Naive thymus-derived CD8-positive, alpha-beta T cell (primary cell): ENCODE measurements at regions of chr16 and their contacts with region 1.

Region 1: GRCh38 chr16:29700253-29700987 is 21.4 kb downstream of the QPRT start:
- DNase-seq: peak; percentile 59 to 83 (median 76)
- ATAC-seq: peak in 1 of 2 donors; percentile 27
- H3K4me3 Mint-ChIP-seq: peak overlapping the region; percentile 44 to 87 (median 76)
- H3K27ac Mint-ChIP-seq: peak overlapping the region; percentile 90 to 100 (median 96)
- H3K4me1 Mint-ChIP-seq: peaks cover 18 to 33% (median 30%) of the 10 kb centered on the region in 4 donors
- H3K27me3 Mint-ChIP-seq: peaks cover 0 to 1% (median 0%) of the 10 kb centered on the region in 5 donors

Region 2: DNA sequence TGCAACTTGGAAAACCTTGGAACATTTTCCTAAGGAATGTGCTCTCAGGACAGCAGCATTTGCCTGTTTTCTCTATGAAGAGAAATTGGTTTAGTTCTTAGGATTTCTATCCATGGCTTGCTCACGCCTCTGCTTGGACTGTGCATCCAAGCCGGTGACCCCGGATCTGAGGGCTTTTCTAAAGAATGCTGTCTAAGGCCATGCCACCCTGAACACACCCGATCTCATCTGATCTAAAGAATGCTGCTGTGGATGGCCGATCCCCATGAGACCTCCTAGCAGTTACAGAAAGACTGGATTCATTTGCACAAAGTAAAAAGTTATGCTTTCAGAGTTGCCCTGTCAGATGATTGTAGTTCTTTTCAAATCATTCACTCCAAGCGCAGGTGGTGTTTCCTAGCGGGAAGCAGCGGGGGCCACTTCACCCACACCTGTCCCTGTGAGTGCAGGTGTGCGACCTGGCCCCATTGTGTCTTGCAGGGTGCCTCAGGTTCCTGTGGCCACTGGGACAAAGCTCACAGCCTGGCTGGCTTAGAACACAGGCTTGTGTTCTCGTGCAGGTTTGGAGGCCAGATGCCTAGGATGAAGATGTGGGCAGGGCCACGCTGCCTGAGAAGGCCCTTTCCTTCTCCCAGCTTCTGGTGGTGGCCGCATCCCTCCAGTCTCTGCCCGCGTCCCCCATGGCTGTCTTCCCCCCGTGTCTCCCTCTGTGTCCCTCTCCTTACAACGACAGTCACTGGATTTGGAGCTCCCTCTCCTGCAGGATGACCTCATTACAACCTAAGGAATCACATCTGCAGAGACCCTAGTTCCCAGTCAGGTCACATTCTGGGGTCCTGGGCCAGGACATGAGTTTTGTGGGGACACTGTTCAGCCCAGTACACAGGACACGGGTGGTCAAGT is 384.6 kb before region 1 on chr16:
- POLR2A ChIA-PET with region 1: no interaction called
- DNase-seq: no peak
- ATAC-seq: no peak
- H3K4me3 Mint-ChIP-seq: no peak overlapping the region
- H3K27ac Mint-ChIP-seq: peak overlapping the region in 1 of 10 donors; percentile 36
- H3K4me1 Mint-ChIP-seq: peaks cover 0 to 3% (median under 1%) of the 10 kb centered on the region in 4 donors
- H3K27me3 Mint-ChIP-seq: no peaks in the 10 kb centered on the region

Region 3: DNA sequence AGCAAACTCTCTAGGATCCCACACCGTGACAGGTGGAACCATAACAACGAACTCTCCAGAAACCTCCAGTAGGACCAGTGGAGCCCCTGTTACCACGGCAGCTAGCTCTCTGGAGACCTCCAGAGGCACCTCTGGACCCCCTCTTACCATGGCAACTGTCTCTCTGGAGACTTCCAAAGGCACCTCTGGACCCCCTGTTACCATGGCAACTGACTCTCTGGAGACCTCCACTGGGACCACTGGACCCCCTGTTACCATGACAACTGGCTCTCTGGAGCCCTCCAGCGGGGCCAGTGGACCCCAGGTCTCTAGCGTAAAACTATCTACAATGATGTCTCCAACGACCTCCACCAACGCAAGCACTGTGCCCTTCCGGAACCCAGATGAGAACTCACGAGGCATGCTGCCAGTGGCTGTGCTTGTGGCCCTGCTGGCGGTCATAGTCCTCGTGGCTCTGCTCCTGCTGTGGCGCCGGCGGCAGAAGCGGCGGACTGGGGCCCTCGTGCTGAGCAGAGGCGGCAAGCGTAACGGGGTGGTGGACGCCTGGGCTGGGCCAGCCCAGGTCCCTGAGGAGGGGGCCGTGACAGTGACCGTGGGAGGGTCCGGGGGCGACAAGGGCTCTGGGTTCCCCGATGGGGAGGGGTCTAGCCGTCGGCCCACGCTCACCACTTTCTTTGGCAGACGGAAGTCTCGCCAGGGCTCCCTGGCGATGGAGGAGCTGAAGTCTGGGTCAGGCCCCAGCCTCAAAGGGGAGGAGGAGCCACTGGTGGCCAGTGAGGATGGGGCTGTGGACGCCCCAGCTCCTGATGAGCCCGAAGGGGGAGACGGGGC is 36.1 kb before region 1 on chr16:
- POLR2A ChIA-PET with region 1: interaction called, 10 read pairs
- DNase-seq: peak in 9 of 10 donors; percentile 36 to 77 (median 54)
- ATAC-seq: peak; percentile 44 to 49
- H3K4me3 Mint-ChIP-seq: peak overlapping the region; percentile 93 to 99 (median 96)
- H3K27ac Mint-ChIP-seq: peak overlapping the region; percentile 94 to 100 (median 97)
- H3K4me1 Mint-ChIP-seq: peaks cover 39 to 77% (median 69%) of the 10 kb centered on the region in 4 donors
- H3K27me3 Mint-ChIP-seq: peaks cover 0 to 3% (median 0%) of the 10 kb centered on the region in 5 donors

Region 4: GRCh38 chr16:29720699-29721098 is 20.3 kb after region 1 on chr16:
- POLR2A ChIA-PET with region 1: interaction called, 17 read pairs
- DNase-seq: no peak
- ATAC-seq: no peak
- H3K4me3 Mint-ChIP-seq: no peak overlapping the region
- H3K27ac Mint-ChIP-seq: peak overlapping the region in 4 of 10 donors; percentile 15 to 81 (median 70)
- H3K4me1 Mint-ChIP-seq: peaks cover 9 to 23% (median 20%) of the 10 kb centered on the region in 4 donors
- H3K27me3 Mint-ChIP-seq: no peaks in the 10 kb centered on the region

Region 5: DNA sequence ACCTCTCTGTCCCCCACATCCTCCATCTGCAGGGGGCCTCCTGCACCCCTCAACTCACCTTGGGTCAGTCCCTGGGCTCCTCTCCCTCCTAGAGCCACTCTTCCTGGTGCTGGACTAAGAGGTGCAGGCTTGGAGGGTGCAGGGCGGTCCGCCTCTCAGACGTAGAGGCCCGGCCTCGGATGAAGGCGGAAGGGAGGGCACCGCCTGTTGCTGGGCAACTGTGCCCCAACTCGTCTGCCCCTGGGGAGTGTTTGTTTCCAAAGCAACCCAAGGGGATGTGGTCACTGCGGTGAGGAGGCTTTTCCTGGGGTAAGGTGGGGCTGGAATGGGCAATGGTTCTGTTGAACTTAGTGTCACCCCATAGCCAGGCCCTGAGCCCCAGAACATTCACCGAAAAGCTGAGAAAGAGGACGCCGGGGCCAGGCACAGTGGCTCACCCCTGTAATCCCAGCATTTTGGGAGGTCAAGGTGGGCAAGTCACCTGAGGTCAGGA is 45.5 kb after region 1 on chr16 and contains the start of gene C16orf54:
- POLR2A ChIA-PET with region 1: interaction called, 50 read pairs
- DNase-seq: peak; percentile 81 to 100 (median 98)
- ATAC-seq: peak; percentile 71 to 83
- H3K4me3 Mint-ChIP-seq: peak within 1 kb of the TSS; percentile 96 to 100 (median 99)
- H3K27ac Mint-ChIP-seq: peak within 1 kb of the TSS; percentile 82 to 100 (median 100)
- H3K4me1 Mint-ChIP-seq: peaks cover 34 to 76% (median 67%) of the 10 kb centered on the region in 4 donors
- H3K27me3 Mint-ChIP-seq: peaks cover 0 to 4% (median 0%) of the 10 kb centered on the region in 5 donors
- polyA plus RNA-seq, gene C16orf54: 20.7 to 32.7 (median 29.2) TPM

Region 6: DNA sequence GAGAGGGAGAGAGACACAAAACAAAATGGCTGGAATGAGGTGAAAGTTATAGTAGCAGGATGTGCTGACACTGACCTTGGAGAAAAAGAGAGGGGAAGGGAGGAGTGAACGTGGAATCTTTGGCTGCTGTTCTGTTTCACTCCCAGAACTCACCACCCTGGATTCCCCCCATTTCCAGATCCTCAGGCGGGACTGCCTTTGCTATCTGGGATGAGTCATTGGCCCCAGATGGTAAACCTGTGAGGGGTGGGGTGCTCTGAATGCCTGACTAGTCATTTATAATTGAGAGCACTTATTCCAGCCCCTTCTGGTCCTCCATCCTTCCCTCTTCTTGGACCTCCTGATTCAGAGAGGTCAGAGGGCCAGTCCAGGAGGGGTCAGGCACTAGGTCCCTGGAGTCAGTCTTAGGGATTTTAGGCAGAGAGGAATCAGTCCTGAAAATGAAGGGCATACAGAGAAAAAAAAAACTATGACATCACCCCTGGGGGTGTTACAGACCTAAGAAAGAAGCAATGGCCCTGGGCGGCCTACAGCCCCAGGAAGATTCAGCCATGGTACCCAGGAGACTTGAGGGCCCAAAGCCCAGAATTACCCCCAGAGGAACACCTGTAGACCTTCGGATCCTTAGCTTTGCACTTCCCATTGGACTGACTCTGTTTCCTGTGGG is 75.5 kb after region 1 on chr16:
- POLR2A ChIA-PET with region 1: no interaction called
- DNase-seq: no peak
- ATAC-seq: no peak
- H3K4me3 Mint-ChIP-seq: no peak overlapping the region
- H3K27ac Mint-ChIP-seq: peak overlapping the region in 1 of 10 donors; percentile 93
- H3K4me1 Mint-ChIP-seq: peaks cover 5 to 54% (median 20%) of the 10 kb centered on the region in 4 donors
- H3K27me3 Mint-ChIP-seq: no peaks in the 10 kb centered on the region

Region 7: GRCh38 chr16:29790183-29790952 is 89.9 kb after region 1 on chr16 and contains the start of gene KIF22:
- POLR2A ChIA-PET with region 1: interaction called, 98 read pairs
- DNase-seq: peak; percentile 98 to 100 (median 100)
- ATAC-seq: peak; percentile 92 to 94
- H3K4me3 Mint-ChIP-seq: peak within 1 kb of the TSS; percentile 95 to 99 (median 98)
- H3K27ac Mint-ChIP-seq: peak within 1 kb of the TSS; percentile 98 to 99 (median 99)
- H3K4me1 Mint-ChIP-seq: peaks cover 22 to 58% (median 52%) of the 10 kb centered on the region in 4 donors
- H3K27me3 Mint-ChIP-seq: no peaks in the 10 kb centered on the region
- polyA plus RNA-seq, gene KIF22: 36.9 to 45.4 (median 39.6) TPM

Region 8: GRCh38 chr16:29825145-29826044 is 125.0 kb after region 1 on chr16:
- POLR2A ChIA-PET with region 1: interaction called, 11 read pairs
- DNase-seq: peak in 3 of 10 donors; percentile 44 to 61 (median 47)
- ATAC-seq: peak in 1 of 2 donors; percentile 12
- H3K4me3 Mint-ChIP-seq: peak overlapping the region; percentile 65 to 86 (median 81)
- H3K27ac Mint-ChIP-seq: peak overlapping the region; percentile 72 to 99 (median 95)
- H3K4me1 Mint-ChIP-seq: peaks cover 17 to 89% (median 77%) of the 10 kb centered on the region in 4 donors
- H3K27me3 Mint-ChIP-seq: no peaks in the 10 kb centered on the region